ENCODE measurements at regions of chr19 and their contacts with region 1.

Region 1: GRCh38 chr19:1064661-1065605 is 2.0 kb upstream of the ARHGAP45 start:
- DNase-seq: peak in 12 of 14 experiments; percentile 53 to 90 (median 70)
- ATAC-seq: peak; percentile 37
- H3K4me3 ChIP-seq: no peak overlapping the region
- H3K4me3 Mint-ChIP-seq: peak overlapping the region; percentile 90
- H3K27ac ChIP-seq: peak overlapping the region in 1 of 2 donors; percentile 98
- H3K27ac Mint-ChIP-seq: peak overlapping the region; percentile 96
- H3K4me1 ChIP-seq: peaks cover 62% of the 10 kb centered on the region
- H3K4me1 Mint-ChIP-seq: peaks cover 54% of the 10 kb centered on the region
- H3K27me3 ChIP-seq: no peaks in the 10 kb centered on the region
- H3K27me3 Mint-ChIP-seq: no peaks in the 10 kb centered on the region
- CTCF ChIP-seq: peak; percentile 78

Region 2: DNA sequence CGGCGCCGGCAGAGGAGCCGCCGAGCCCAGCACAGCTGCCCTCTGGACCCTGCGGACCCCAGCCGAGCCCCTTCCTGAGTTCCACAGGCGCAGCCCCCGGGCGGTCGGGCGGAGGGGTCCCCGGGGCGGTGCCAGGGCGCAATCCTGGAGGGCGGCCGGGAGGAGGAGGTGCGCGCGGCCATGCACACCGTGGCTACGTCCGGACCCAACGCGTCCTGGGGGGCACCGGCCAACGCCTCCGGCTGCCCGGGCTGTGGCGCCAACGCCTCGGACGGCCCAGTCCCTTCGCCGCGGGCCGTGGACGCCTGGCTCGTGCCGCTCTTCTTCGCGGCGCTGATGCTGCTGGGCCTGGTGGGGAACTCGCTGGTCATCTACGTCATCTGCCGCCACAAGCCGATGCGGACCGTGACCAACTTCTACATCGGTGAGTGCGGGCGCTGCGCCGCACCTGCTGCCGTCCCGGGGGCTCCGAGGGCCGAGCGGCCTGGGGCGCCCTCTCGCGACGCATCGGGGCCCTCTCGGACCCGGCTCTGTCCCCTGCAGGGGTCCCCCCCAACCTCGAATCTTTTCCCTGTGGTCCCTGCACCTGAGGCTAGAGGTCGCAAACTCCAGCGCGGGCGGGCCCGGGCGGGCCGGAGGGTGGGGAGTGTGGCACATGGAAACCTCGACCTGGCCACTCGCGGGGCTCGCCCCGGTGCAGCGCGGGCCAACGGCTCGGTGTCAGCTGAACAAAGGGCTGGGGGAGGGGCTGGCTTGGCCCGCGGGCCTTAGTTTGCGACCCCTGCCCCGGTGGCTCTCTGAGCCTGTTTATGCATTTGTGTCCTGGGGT is 147.4 kb before region 1 on chr19 and contains the start of gene KISS1R:
- CTCF ChIA-PET with region 1: no interaction called
- POLR2A ChIA-PET with region 1: no interaction called
- intact Hi-C with region 1: no loop called
- DNase-seq: peak in 10 of 14 experiments; percentile 27 to 80 (median 58)
- ATAC-seq: no peak
- H3K4me3 ChIP-seq: peak within 1 kb of the TSS; percentile 37
- H3K4me3 Mint-ChIP-seq: peak within 1 kb of the TSS; percentile 89
- H3K27ac ChIP-seq: no peak within 1 kb of the TSS
- H3K27ac Mint-ChIP-seq: peak within 1 kb of the TSS; percentile 72
- H3K4me1 ChIP-seq: peaks cover 66% of the 10 kb centered on the region
- H3K4me1 Mint-ChIP-seq: peaks cover 21% of the 10 kb centered on the region
- H3K27me3 ChIP-seq: peaks cover 11 to 22% of the 10 kb centered on the region in 2 experiments
- H3K27me3 Mint-ChIP-seq: peaks cover 4% of the 10 kb centered on the region
- CTCF ChIP-seq: peak; percentile 81
- total RNA-seq, gene KISS1R: 1.5 to 1.6 TPM

Region 3: DNA sequence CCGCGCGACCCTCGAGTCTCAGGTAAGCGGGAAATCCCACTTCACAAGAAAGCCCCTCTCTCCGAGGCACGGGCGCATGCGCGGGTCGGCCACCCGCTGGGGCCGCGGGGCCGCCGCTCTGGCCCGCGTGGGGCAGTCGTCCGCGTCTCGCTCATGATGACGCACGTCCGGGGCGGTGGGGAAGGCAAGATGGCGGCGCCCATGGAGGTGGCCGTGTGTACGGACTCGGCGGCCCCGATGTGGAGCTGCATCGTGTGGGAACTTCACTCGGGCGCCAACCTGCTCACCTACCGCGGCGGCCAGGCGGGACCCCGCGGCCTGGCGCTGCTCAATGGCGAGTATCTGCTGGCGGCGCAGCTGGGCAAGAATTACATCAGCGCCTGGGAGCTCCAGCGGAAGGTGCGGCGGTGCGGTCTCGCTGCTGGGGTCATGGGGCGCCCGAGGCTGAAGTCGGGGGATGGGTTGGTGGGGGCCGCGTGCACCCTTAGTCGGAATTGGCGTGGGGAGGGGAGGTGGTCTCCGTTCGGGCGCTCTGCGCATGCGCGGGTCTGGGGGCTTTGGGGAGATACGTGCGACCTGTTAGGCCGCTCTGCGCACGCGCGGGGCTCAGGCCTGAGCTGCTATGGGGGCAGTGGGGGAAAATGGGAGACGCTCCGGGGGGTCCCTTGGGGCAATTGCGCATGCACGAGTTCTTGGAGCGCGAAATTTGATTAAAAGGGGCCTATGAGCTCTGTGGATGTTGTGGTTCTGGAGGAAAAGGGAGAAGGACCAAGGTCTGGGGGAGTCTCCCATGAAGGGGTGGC is 80.6 kb before region 1 on chr19 and contains the start of gene WDR18:
- CTCF ChIA-PET with region 1: no interaction called
- POLR2A ChIA-PET with region 1: interaction called, 16 read pairs
- intact Hi-C with region 1: no loop called
- DNase-seq: peak; percentile 71 to 94 (median 84)
- ATAC-seq: peak; percentile 90
- H3K4me3 ChIP-seq: peak within 1 kb of the TSS; percentile 96
- H3K4me3 Mint-ChIP-seq: peak within 1 kb of the TSS; percentile 94
- H3K27ac ChIP-seq: peak within 1 kb of the TSS; percentile 72 to 75
- H3K27ac Mint-ChIP-seq: peak within 1 kb of the TSS; percentile 78
- H3K4me1 ChIP-seq: peaks cover 34% of the 10 kb centered on the region
- H3K4me1 Mint-ChIP-seq: peaks cover 15% of the 10 kb centered on the region
- H3K27me3 ChIP-seq: no peaks in the 10 kb centered on the region
- H3K27me3 Mint-ChIP-seq: no peaks in the 10 kb centered on the region
- CTCF ChIP-seq: no peak
- total RNA-seq, gene WDR18: 16.8 to 17.1 TPM

Region 4: GRCh38 chr19:1026189-1027019 is 38.5 kb before region 1 on chr19 and contains the start of gene CNN2:
- CTCF ChIA-PET with region 1: interaction called, 13 read pairs
- POLR2A ChIA-PET with region 1: interaction called, 143 read pairs
- intact Hi-C with region 1: loop called (anchors 2 to 5 kb)
- DNase-seq: peak in 11 of 14 experiments; percentile 47 to 83 (median 66)
- ATAC-seq: peak; percentile 16
- H3K4me3 ChIP-seq: peak within 1 kb of the TSS; percentile 99
- H3K4me3 Mint-ChIP-seq: peak within 1 kb of the TSS; percentile 99
- H3K27ac ChIP-seq: peak within 1 kb of the TSS; percentile 73 to 85
- H3K27ac Mint-ChIP-seq: peak within 1 kb of the TSS; percentile 93
- H3K4me1 ChIP-seq: peaks cover 50% of the 10 kb centered on the region
- H3K4me1 Mint-ChIP-seq: peaks cover 24% of the 10 kb centered on the region
- H3K27me3 ChIP-seq: no peaks in the 10 kb centered on the region
- H3K27me3 Mint-ChIP-seq: peaks cover 3% of the 10 kb centered on the region
- CTCF ChIP-seq: no peak
- total RNA-seq, gene CNN2: 307 to 318 TPM

Region 5: DNA sequence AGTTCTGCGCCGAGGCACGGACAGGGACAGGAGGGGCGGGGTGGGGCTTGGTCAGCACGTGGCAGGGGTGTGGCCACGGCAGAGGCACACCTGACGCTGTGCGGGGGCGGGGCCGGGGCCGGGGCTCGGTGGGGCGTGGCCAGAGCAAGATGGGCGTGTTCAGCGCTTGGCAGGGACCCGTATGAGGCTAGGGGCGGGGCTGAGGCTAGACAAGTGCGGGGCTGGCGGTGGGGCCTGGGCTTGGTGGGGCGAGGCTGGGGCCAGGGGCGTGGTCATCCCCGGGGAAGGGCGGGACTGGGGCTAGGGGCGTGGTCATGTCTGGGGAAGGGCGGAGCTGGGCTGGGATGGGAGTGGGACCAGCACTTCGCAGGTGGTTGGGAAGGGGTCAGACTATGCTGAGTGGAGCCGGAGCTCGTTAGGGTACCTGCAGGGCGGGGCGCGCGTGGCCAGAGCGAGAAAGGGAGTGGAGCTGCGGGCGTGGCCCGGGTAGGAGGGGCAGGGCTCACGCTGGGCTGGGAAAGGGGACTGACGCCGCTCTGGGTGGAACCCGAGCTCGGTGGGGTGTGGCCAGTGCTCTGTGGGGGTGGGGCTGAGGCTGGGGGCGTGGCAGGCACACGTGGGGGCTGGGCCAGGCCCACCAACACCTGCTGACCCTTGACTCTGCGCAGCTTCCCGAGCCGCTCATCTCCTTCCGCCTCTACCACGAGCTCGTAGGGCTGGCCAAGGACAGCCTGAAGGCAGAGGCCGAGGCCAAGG is 17.4 kb after region 1 on chr19:
- CTCF ChIA-PET with region 1: interaction called, 42 read pairs
- POLR2A ChIA-PET with region 1: interaction called, 1,253 read pairs
- intact Hi-C with region 1: loop called (anchors 1 to 2 kb)
- DNase-seq: peak; percentile 76 to 95 (median 86)
- ATAC-seq: peak; percentile 76
- H3K4me3 ChIP-seq: no peak overlapping the region
- H3K4me3 Mint-ChIP-seq: peak overlapping the region; percentile 87
- H3K27ac ChIP-seq: peak overlapping the region; percentile 34 to 64
- H3K27ac Mint-ChIP-seq: peak overlapping the region; percentile 98
- H3K4me1 ChIP-seq: peaks cover 92% of the 10 kb centered on the region
- H3K4me1 Mint-ChIP-seq: peaks cover 39% of the 10 kb centered on the region
- H3K27me3 ChIP-seq: no peaks in the 10 kb centered on the region
- H3K27me3 Mint-ChIP-seq: no peaks in the 10 kb centered on the region
- CTCF ChIP-seq: no peak

Region 6: GRCh38 chr19:1094975-1095701 is 30.2 kb after region 1 on chr19 and contains the start of gene POLR2E:
- CTCF ChIA-PET with region 1: interaction called, 42 read pairs
- POLR2A ChIA-PET with region 1: interaction called, 1,253 read pairs
- intact Hi-C with region 1: loop called (anchors 5 kb)
- DNase-seq: peak; percentile 97 to 100 (median 98)
- ATAC-seq: peak; percentile 90
- H3K4me3 ChIP-seq: peak within 1 kb of the TSS; percentile 89
- H3K4me3 Mint-ChIP-seq: peak within 1 kb of the TSS; percentile 94
- H3K27ac ChIP-seq: peak within 1 kb of the TSS; percentile 65 to 90
- H3K27ac Mint-ChIP-seq: peak within 1 kb of the TSS; percentile 84
- H3K4me1 ChIP-seq: peaks cover 61% of the 10 kb centered on the region
- H3K4me1 Mint-ChIP-seq: peaks cover 41% of the 10 kb centered on the region
- H3K27me3 ChIP-seq: no peaks in the 10 kb centered on the region
- H3K27me3 Mint-ChIP-seq: no peaks in the 10 kb centered on the region
- CTCF ChIP-seq: no peak
- total RNA-seq, gene POLR2E: 45.8 to 49.0 TPM

Region 7: GRCh38 chr19:1121396-1121795 is 56.5 kb after region 1 on chr19:
- CTCF ChIA-PET with region 1: no interaction called
- POLR2A ChIA-PET with region 1: no interaction called
- intact Hi-C with region 1: no loop called
- DNase-seq: no peak
- ATAC-seq: no peak
- H3K4me3 ChIP-seq: no peak overlapping the region
- H3K4me3 Mint-ChIP-seq: no peak overlapping the region
- H3K27ac ChIP-seq: no peak overlapping the region
- H3K27ac Mint-ChIP-seq: peak overlapping the region; percentile 30
- H3K4me1 ChIP-seq: peaks cover 19% of the 10 kb centered on the region
- H3K4me1 Mint-ChIP-seq: no peaks in the 10 kb centered on the region
- H3K27me3 ChIP-seq: no peaks in the 10 kb centered on the region
- H3K27me3 Mint-ChIP-seq: no peaks in the 10 kb centered on the region
- CTCF ChIP-seq: no peak

Region 8: DNA sequence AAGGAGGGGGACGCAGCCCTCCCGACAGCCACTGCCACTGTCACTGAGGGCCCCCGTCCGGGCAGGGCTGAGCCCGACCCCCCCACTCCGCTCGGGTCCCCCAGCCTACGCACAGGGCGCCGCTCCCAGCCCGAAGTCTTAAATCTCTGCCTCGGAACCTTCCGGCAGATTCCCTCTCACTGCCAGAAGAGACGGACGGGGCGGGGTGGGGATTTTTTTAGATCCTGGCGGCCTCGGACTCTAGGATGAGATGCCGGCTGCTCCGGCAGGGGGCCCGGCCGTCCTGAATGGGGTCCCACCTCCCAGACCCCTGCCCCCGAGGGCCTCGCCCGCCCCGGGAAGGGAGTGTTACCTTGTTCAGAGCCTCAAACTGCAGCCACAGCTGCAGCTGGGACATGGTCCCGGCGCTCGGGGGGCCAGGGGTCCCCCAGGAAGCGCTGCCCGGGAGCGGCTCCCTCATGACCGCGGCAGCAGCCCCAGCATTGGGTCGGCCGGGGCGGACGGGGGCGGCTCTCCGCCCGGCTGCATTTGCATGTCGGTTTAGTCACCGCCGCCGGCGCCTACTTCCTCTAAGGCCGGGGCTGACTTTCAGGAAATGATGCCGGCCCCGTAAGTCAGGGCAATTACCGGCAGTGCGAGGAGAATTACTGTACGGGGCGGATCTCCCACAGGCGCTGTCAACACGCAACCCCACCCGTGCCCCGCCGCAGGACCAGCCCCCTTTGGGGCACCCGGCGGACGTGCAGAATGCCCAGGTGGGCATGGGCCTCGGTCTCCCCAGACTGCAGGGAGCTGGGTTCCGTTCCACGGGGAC is 67.0 kb after region 1 on chr19:
- CTCF ChIA-PET with region 1: interaction called, 3 read pairs
- POLR2A ChIA-PET with region 1: interaction called, 14 read pairs
- intact Hi-C with region 1: no loop called
- DNase-seq: peak; percentile 62 to 94 (median 88)
- ATAC-seq: peak; percentile 69
- H3K4me3 ChIP-seq: peak overlapping the region; percentile 95
- H3K4me3 Mint-ChIP-seq: peak overlapping the region; percentile 90
- H3K27ac ChIP-seq: peak overlapping the region; percentile 87 to 92
- H3K27ac Mint-ChIP-seq: peak overlapping the region; percentile 96
- H3K4me1 ChIP-seq: peaks cover 90% of the 10 kb centered on the region
- H3K4me1 Mint-ChIP-seq: peaks cover 36% of the 10 kb centered on the region
- H3K27me3 ChIP-seq: no peaks in the 10 kb centered on the region
- H3K27me3 Mint-ChIP-seq: no peaks in the 10 kb centered on the region
- CTCF ChIP-seq: no peak